HepG2 (cell line): ENCODE measurements at regions of chr4 and their contacts with region 1.

Region 1: GRCh38 chr4:159487284-159487747 is 384.4 kb downstream of the RAPGEF2 start:
- DNase-seq: peak; percentile 68
- ATAC-seq: peak; percentile 99
- H3K4me3 ChIP-seq: no peak overlapping the region
- H3K27ac ChIP-seq: no peak overlapping the region
- H3K4me1 ChIP-seq: no peaks in the 10 kb centered on the region
- H3K27me3 ChIP-seq: no peaks in the 10 kb centered on the region
- CTCF ChIP-seq: peak; percentile 86
- EP300 ChIP-seq: no peak
- POLR2A ChIP-seq: no peak
- RAD21 ChIP-seq: peak; percentile 71

Region 2: DNA sequence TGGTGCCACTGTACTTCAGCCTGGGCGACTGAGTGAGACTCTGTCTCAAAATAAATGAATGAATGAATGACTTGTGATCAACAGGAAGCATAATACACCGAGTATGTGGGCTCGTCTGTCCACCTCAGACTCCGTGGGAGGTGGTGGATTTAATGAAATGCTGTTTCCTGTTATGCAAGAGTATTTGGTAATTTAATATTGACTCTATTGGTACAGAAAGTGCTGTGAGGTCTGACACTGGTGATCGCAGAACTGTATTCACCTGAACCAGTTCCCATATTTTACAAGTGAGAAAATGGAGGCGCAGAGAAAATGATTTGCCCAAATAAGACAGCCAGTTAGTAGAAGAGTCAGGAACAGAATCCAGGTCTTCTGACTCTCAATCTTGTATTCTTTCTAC is 38.9 kb after region 1 on chr4:
- CTCF ChIA-PET with region 1: no interaction called
- POLR2A ChIA-PET with region 1: no interaction called
- in situ Hi-C with region 1: no loop called
- intact Hi-C with region 1: no loop called
- DNase-seq: no peak
- ATAC-seq: no peak
- H3K4me3 ChIP-seq: no peak overlapping the region
- H3K27ac ChIP-seq: no peak overlapping the region
- H3K4me1 ChIP-seq: no peaks in the 10 kb centered on the region
- H3K27me3 ChIP-seq: no peaks in the 10 kb centered on the region
- CTCF ChIP-seq: no peak
- EP300 ChIP-seq: no peak
- POLR2A ChIP-seq: no peak
- RAD21 ChIP-seq: no peak

Region 3: GRCh38 chr4:159764343-159764952 is 277.1 kb after region 1 on chr4:
- CTCF ChIA-PET with region 1: no interaction called
- POLR2A ChIA-PET with region 1: no interaction called
- in situ Hi-C with region 1: no loop called
- intact Hi-C with region 1: loop called (anchors 1 kb)
- DNase-seq: peak; percentile 31
- ATAC-seq: peak; percentile 87
- H3K4me3 ChIP-seq: no peak overlapping the region
- H3K27ac ChIP-seq: no peak overlapping the region
- H3K4me1 ChIP-seq: no peaks in the 10 kb centered on the region
- H3K27me3 ChIP-seq: no peaks in the 10 kb centered on the region
- CTCF ChIP-seq: peak; percentile 62
- EP300 ChIP-seq: no peak
- POLR2A ChIP-seq: no peak
- RAD21 ChIP-seq: no peak

Region 4: DNA sequence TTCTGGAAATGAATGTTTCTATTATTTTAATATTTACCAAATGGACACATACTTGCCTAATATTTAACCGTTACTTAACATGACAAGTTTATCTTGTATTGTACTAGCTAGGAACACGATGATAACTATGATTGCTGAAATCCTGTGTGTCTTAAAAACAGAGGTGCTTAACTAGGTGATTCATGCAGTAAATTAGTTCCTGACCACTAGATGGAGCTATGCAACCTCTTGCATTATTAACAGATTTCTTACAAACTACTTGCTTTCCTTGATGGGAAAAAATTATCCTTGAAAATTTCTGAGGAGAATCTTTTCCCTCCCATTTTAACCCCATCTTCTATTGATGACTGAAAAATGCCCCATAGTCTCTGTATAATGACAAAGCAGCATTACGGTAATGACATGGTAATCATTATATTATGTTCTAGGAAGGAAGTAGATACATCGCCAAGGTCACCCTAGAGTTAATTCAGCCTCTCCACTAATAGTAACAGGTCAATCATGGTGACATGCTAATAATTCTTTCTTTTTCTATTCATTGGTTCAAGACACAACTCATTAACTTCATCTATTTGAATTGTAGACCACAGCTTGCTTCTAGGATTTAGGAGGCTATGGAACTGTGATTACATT is 459.8 kb after region 1 on chr4:
- CTCF ChIA-PET with region 1: no interaction called
- POLR2A ChIA-PET with region 1: no interaction called
- in situ Hi-C with region 1: no loop called
- intact Hi-C with region 1: loop called (anchors 1 kb)
- DNase-seq: peak; percentile 52
- ATAC-seq: no peak
- H3K4me3 ChIP-seq: no peak overlapping the region
- H3K27ac ChIP-seq: no peak overlapping the region
- H3K4me1 ChIP-seq: no peaks in the 10 kb centered on the region
- H3K27me3 ChIP-seq: no peaks in the 10 kb centered on the region
- CTCF ChIP-seq: peak; percentile 65
- EP300 ChIP-seq: no peak
- POLR2A ChIP-seq: no peak
- RAD21 ChIP-seq: no peak

Region 5: GRCh38 chr4:161252520-161253141 is 1765.3 kb after region 1 on chr4:
- CTCF ChIA-PET with region 1: no interaction called
- POLR2A ChIA-PET with region 1: no interaction called
- in situ Hi-C with region 1: no loop called
- intact Hi-C with region 1: loop called (anchors 5 kb)
- DNase-seq: peak; percentile 23
- ATAC-seq: peak; percentile 72
- H3K4me3 ChIP-seq: no peak overlapping the region
- H3K27ac ChIP-seq: no peak overlapping the region
- H3K4me1 ChIP-seq: no peaks in the 10 kb centered on the region
- H3K27me3 ChIP-seq: no peaks in the 10 kb centered on the region
- CTCF ChIP-seq: peak; percentile 68
- EP300 ChIP-seq: no peak
- POLR2A ChIP-seq: no peak
- RAD21 ChIP-seq: no peak

Region 6: GRCh38 chr4:161314371-161314770 is 1827.1 kb after region 1 on chr4:
- CTCF ChIA-PET with region 1: no interaction called
- POLR2A ChIA-PET with region 1: no interaction called
- in situ Hi-C with region 1: no loop called
- intact Hi-C with region 1: loop called (anchors 10 kb)
- DNase-seq: no peak
- ATAC-seq: no peak
- H3K4me3 ChIP-seq: no peak overlapping the region
- H3K27ac ChIP-seq: no peak overlapping the region
- H3K4me1 ChIP-seq: no peaks in the 10 kb centered on the region
- H3K27me3 ChIP-seq: no peaks in the 10 kb centered on the region
- CTCF ChIP-seq: no peak
- EP300 ChIP-seq: no peak
- POLR2A ChIP-seq: no peak
- RAD21 ChIP-seq: no peak